Common myeloid progenitor, CD34-positive (primary cell): ENCODE measurements at regions of chr11 and their contacts with region 1.

Region 1: GRCh38 chr11:122749005-122749687 is 89.2 kb upstream of the CRTAM start:
- DNase-seq: peak; percentile 80 to 97 (median 96)
- H3K4me3 ChIP-seq: peak overlapping the region in 2 of 7 experiments; percentile 12 to 20
- H3K27ac ChIP-seq: no peak overlapping the region
- H3K4me1 ChIP-seq: peaks cover 19 to 83% (median 51%) of the 10 kb centered on the region in 4 experiments
- H3K27me3 ChIP-seq: no peaks in the 10 kb centered on the region

Region 2: GRCh38 chr11:122584670-122585069 is 164.5 kb before region 1 on chr11:
- CTCF ChIA-PET with region 1: no interaction called
- POLR2A ChIA-PET with region 1: no interaction called
- DNase-seq: no peak
- H3K4me3 ChIP-seq: no peak overlapping the region
- H3K27ac ChIP-seq: no peak overlapping the region
- H3K4me1 ChIP-seq: peaks cover 2 to 11% (median 8%) of the 10 kb centered on the region in 4 experiments
- H3K27me3 ChIP-seq: no peaks in the 10 kb centered on the region

Region 3: GRCh38 chr11:122628810-122629555 is 120.2 kb before region 1 on chr11:
- CTCF ChIA-PET with region 1: interaction called, 369 read pairs
- POLR2A ChIA-PET with region 1: no interaction called
- DNase-seq: peak; percentile 73 to 85 (median 81)
- H3K4me3 ChIP-seq: no peak overlapping the region
- H3K27ac ChIP-seq: no peak overlapping the region
- H3K4me1 ChIP-seq: peaks cover 0 to 18% (median 2%) of the 10 kb centered on the region in 4 experiments
- H3K27me3 ChIP-seq: no peaks in the 10 kb centered on the region

Region 4: GRCh38 chr11:122655527-122656072 is 93.5 kb before region 1 on chr11 and contains the start of gene UBASH3B:
- CTCF ChIA-PET with region 1: interaction called, 325 read pairs
- POLR2A ChIA-PET with region 1: interaction called, 3 read pairs
- DNase-seq: peak; percentile 66 to 83 (median 70)
- H3K4me3 ChIP-seq: peak within 1 kb of the TSS; percentile 75 to 94 (median 84)
- H3K27ac ChIP-seq: peak within 1 kb of the TSS in 1 of 2 experiments; percentile 57
- H3K4me1 ChIP-seq: peaks cover 11 to 48% (median 37%) of the 10 kb centered on the region in 4 experiments
- H3K27me3 ChIP-seq: no peaks in the 10 kb centered on the region

Region 5: DNA sequence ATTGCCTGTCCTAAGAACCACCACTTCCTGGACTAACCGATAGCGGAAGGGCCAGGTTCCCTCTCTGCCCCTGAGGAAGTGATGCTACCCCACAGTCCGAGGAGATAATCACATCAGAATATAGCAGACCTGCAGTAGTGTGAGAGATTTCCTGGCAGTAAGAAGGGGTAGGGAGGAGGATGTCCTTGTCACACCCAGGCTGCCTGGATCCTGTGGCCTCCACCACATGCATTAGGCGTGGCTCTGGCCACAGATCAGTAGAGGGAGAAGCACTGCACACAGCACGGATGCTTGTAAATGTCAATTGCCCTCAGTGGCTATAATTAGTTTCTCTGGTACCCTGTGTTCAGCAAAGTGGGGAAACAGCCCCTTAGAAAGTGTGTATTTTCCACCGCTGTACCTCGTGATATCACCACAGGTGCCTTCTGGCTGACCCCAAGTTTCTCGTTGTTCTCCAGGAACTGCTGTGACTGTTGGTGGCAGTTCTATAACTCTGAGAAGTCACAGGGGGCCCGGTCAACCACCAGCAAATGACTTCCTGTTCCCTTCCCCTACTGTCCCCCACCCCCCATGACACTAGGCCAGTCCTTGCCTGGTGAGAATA is 31.8 kb before region 1 on chr11:
- CTCF ChIA-PET with region 1: interaction called, 114 read pairs
- POLR2A ChIA-PET with region 1: no interaction called
- DNase-seq: peak; percentile 64 to 97 (median 93)
- H3K4me3 ChIP-seq: peak overlapping the region in 3 of 7 experiments; percentile 1 to 26 (median 2)
- H3K27ac ChIP-seq: peak overlapping the region in 1 of 2 experiments; percentile 15
- H3K4me1 ChIP-seq: peaks cover 34 to 92% (median 65%) of the 10 kb centered on the region in 4 experiments
- H3K27me3 ChIP-seq: no peaks in the 10 kb centered on the region

Region 6: GRCh38 chr11:122733318-122733717 is 15.8 kb before region 1 on chr11:
- CTCF ChIA-PET with region 1: interaction called, 28 read pairs
- POLR2A ChIA-PET with region 1: no interaction called
- DNase-seq: no peak
- H3K4me3 ChIP-seq: no peak overlapping the region
- H3K27ac ChIP-seq: no peak overlapping the region
- H3K4me1 ChIP-seq: peaks cover 11 to 45% (median 22%) of the 10 kb centered on the region in 4 experiments
- H3K27me3 ChIP-seq: no peaks in the 10 kb centered on the region

Region 7: DNA sequence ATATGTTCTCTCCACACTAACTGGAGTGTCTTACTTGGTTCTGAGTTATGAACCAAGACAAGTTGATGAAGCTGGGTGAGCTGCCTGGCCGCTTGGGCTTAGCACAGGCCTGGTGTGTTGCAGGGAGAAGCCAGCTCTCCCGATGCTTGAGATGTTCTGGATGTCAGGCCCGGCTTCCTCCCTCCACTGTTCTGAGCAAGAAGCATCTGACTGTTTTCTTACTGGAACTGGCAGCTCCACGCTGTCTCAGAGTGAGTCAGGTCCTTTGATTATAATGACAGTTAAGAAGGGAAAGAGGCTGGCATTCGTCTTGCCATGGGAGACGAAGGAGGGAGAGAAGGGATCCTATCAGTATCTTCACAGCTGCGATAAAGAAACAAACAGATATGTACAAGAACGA is 42.7 kb after region 1 on chr11:
- CTCF ChIA-PET with region 1: no interaction called
- POLR2A ChIA-PET with region 1: no interaction called
- DNase-seq: no peak
- H3K4me3 ChIP-seq: no peak overlapping the region
- H3K27ac ChIP-seq: no peak overlapping the region
- H3K4me1 ChIP-seq: no peaks in the 10 kb centered on the region
- H3K27me3 ChIP-seq: no peaks in the 10 kb centered on the region